A673 (cell line): ENCODE measurements at regions of chr12 and their contacts with region 1.

Region 1: DNA sequence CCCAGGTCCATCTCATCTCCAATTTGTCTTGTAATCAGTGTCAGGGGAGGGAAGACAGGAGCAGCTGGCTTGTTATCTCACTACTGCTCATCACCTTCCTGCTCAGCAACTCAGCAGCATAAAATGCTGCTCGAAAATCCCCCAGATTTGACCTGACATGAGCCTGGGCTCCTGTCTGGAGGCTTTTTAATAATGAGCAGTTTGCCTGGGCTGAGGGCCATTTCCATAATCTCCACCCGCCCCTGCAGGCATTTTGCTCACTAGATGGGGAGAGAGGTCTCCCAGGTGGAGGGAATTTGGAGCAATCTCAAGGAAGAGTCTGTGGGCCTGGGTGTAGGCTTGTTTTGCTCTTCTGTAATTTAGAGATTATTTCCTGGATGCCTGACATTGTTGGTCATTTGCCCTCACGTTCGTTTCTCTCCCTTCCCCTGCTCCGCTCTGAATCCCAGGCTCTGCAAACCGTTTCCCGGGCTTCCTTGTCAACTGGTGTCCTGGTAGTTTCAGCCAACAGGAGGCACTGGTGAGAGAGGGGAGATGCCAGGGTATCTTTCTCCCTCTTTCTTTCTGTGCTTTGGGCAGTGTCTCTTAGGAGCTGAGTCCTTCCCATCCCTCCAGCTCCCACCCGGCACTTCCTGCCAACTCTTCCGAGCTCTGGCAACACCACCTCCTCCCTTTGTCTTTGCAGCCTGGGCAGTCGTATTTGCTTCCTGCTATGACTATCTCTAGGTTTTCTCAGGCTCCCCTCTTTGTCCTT is 299.2 kb downstream of the GLT1D1 start:
- DNase-seq: no peak
- H3K4me3 ChIP-seq: no peak overlapping the region
- H3K27ac ChIP-seq: no peak overlapping the region
- H3K4me1 ChIP-seq: no peaks in the 10 kb centered on the region
- H3K27me3 ChIP-seq: no peaks in the 10 kb centered on the region
- CTCF ChIP-seq: no peak

Region 2: GRCh38 chr12:129127211-129127610 is 25.3 kb before region 1 on chr12:
- CTCF ChIA-PET with region 1: interaction called, 11 read pairs
- POLR2A ChIA-PET with region 1: no interaction called
- intact Hi-C with region 1: no loop called
- DNase-seq: no peak
- H3K4me3 ChIP-seq: no peak overlapping the region
- H3K27ac ChIP-seq: no peak overlapping the region
- H3K4me1 ChIP-seq: no peaks in the 10 kb centered on the region
- H3K27me3 ChIP-seq: no peaks in the 10 kb centered on the region
- CTCF ChIP-seq: no peak

Region 3: DNA sequence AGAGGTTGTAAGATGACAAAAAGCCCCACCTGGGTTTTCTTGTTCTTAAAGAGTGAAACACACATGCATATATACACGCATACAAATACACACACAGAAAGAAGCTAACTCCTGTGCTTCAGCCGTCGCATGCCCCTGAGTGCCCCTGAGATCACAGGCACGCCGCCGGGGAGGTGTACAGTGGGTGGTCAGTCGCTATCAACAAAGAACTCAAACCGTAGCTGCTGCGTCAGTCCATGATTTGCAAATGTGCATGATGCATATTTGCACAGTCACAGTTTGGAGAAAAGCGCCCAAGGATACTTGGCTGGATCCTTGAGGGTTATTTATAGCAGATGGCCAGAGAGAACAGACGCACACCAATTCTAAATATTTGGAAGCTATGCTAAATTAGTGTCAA is 544.4 kb after region 1 on chr12:
- CTCF ChIA-PET with region 1: no interaction called
- POLR2A ChIA-PET with region 1: no interaction called
- intact Hi-C with region 1: no loop called
- DNase-seq: no peak
- H3K4me3 ChIP-seq: no peak overlapping the region
- H3K27ac ChIP-seq: no peak overlapping the region
- H3K4me1 ChIP-seq: no peaks in the 10 kb centered on the region
- H3K27me3 ChIP-seq: no peaks in the 10 kb centered on the region
- CTCF ChIP-seq: no peak